Esophagus muscularis mucosa (tissue), 4 donors: ENCODE measurements at regions of chr7 and their contacts with region 1.

Region 1: GRCh38 chr7:87416682-87417587 is 58.5 kb downstream of the ABCB4 start:
- DNase-seq: no peak
- H3K4me3 ChIP-seq: no peak overlapping the region
- H3K27ac ChIP-seq: no peak overlapping the region
- H3K4me1 ChIP-seq: no peaks in the 10 kb centered on the region
- H3K27me3 ChIP-seq: no peaks in the 10 kb centered on the region
- CTCF ChIP-seq: peak; percentile 63 to 68 (median 64)
- EP300 ChIP-seq: no peak
- POLR2A ChIP-seq: no peak

Region 2: GRCh38 chr7:87312215-87312865 is 104.6 kb before region 1 on chr7:
- intact Hi-C with region 1: loop called (anchors 1 kb)
- DNase-seq: no peak
- H3K4me3 ChIP-seq: no peak overlapping the region
- H3K27ac ChIP-seq: no peak overlapping the region
- H3K4me1 ChIP-seq: peaks cover 0 to 6% (median 2%) of the 10 kb centered on the region in 4 donors
- H3K27me3 ChIP-seq: no peaks in the 10 kb centered on the region
- CTCF ChIP-seq: peak; percentile 95 to 98 (median 98)
- EP300 ChIP-seq: no peak
- POLR2A ChIP-seq: no peak

Region 3: DNA sequence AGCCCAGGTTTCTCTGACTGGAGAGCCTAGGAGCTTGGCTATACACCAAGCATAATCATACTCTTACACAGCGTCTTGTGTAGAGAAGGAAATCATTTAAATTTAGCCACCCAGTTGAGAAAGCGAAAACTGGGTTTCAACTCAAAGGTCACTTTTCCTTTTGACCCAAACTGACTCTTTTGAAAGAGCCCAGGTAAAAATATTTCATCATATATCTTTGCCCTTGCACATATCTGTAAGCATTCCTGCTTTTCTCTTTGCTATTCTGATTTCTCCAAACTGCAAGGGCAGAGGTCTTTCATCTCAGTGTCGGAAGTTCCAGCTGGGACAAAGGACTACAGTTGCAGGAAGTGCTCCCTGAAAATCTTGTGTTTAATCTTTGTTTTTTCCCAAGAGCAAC is 80.5 kb after region 1 on chr7:
- intact Hi-C with region 1: no loop called
- DNase-seq: no peak
- H3K4me3 ChIP-seq: no peak overlapping the region
- H3K27ac ChIP-seq: no peak overlapping the region
- H3K4me1 ChIP-seq: no peaks in the 10 kb centered on the region
- H3K27me3 ChIP-seq: no peaks in the 10 kb centered on the region
- CTCF ChIP-seq: no peak
- EP300 ChIP-seq: no peak
- POLR2A ChIP-seq: no peak

Region 4: GRCh38 chr7:87528741-87529140 is 111.8 kb after region 1 on chr7:
- intact Hi-C with region 1: no loop called
- DNase-seq: no peak
- H3K4me3 ChIP-seq: no peak overlapping the region
- H3K27ac ChIP-seq: no peak overlapping the region
- H3K4me1 ChIP-seq: no peaks in the 10 kb centered on the region
- H3K27me3 ChIP-seq: no peaks in the 10 kb centered on the region
- CTCF ChIP-seq: no peak
- EP300 ChIP-seq: no peak
- POLR2A ChIP-seq: no peak